Heart right ventricle (tissue), 16 donors: ENCODE measurements at regions of chr5 and their contacts with region 1.

Region 1: GRCh38 chr5:55724281-55724680 is 12.2 kb upstream of the SLC38A9 start:
- DNase-seq: no peak
- ATAC-seq: no peak
- H3K4me3 ChIP-seq: no peak overlapping the region
- H3K27ac ChIP-seq: no peak overlapping the region
- H3K4me1 ChIP-seq: no peaks in the 10 kb centered on the region
- H3K27me3 ChIP-seq: no peaks in the 10 kb centered on the region
- CTCF ChIP-seq: no peak

Region 2: DNA sequence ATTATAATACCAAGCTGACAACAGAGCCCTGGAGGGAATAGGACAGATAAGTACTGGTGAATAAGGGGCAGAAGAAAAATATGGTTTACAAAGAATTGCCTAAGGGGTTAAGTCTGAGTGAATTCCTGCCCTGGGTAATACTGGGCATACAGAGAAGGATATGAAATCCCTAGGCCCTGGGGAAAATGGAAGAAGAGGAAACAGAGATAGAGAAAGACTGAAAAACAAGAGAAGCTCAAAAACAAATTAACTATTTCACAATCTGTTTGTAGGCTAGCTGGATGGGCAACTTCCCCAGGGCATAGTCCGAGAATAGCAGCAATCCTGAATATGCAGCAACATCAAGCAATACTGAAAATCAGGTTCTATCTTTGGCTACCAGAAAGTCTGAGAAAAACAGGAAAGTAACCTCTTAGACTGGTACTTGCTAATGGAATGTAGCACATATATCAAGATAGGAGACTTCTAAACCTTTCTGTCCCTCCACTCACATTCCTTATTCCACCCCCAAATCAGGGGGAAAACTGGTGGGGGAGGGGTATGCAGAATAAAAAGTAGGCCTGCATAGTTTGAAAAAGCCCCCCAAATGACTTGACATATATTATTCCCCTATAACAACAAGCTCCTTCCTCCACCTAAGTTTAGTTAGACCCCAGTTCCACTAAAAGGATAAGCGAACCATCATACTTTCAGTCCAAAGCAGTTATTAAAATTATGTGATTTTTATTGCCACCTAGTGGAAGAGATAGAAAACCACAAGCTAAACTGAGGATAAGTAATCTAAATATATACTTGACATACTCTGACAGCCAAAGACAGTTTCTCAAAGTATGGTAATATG is 32.8 kb before region 1 on chr5:
- intact Hi-C with region 1: no loop called
- DNase-seq: no peak
- ATAC-seq: peak; percentile 65 to 86 (median 73)
- H3K4me3 ChIP-seq: peak overlapping the region in 3 of 10 donors; percentile 11 to 19 (median 19)
- H3K27ac ChIP-seq: peak overlapping the region in 6 of 10 donors; percentile 5 to 52 (median 30)
- H3K4me1 ChIP-seq: peaks cover 6 to 34% (median 21%) of the 10 kb centered on the region in 9 donors
- H3K27me3 ChIP-seq: no peaks in the 10 kb centered on the region
- CTCF ChIP-seq: peak; percentile 42 to 83 (median 72)

Region 3: DNA sequence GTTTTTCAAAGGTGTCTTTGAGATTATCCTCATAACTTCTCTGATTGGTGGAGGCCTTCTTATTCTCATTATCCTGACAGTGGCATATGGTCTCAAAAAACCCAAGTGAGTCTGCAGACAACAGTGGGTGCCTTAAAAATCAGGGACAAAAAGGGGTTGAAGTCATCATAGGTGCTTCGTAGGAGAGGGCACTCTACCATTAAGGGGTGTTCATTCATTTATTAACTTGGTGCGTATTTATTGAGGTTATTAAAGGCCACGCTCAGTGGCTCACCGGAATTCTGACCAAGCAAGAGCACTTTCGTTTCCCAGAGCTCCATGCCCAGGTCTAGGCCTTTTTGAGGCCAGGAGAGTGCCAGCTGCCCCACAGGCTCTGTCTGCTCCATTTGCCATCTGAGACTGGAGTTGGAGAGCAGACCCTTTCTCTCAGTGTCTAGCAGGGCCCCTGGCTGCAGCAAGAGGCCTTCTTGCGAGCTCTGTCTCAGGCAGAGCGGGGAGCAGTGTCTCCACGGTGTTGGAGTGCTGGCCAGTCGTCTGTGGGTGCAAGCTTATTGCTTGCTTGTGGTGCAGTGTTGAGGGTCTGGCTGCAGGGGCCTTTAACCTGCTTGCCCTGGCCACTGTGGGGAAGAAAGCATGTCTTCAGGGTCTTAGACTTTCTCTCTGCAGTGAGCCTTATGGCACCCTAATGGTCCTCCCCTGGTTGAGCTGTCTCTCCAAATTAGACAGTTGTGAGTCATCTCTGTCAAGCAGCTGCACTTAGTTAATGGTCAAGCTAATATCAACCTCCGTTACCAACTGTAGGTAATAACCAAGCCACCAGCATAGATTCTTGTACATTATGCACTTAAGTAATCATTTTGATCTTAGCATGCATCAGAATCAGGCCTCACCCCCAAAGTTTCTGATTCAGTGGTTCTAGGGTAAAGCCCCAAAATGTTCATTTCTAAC is 189.5 kb after region 1 on chr5:
- intact Hi-C with region 1: loop called in 2 of 10 experiments (anchors 10 kb)
- DNase-seq: no peak
- ATAC-seq: no peak
- H3K4me3 ChIP-seq: no peak overlapping the region
- H3K27ac ChIP-seq: no peak overlapping the region
- H3K4me1 ChIP-seq: no peaks in the 10 kb centered on the region
- H3K27me3 ChIP-seq: no peaks in the 10 kb centered on the region
- CTCF ChIP-seq: no peak